ENCODE measurements at regions of chr7 and their contacts with region 1.

Region 1: DNA sequence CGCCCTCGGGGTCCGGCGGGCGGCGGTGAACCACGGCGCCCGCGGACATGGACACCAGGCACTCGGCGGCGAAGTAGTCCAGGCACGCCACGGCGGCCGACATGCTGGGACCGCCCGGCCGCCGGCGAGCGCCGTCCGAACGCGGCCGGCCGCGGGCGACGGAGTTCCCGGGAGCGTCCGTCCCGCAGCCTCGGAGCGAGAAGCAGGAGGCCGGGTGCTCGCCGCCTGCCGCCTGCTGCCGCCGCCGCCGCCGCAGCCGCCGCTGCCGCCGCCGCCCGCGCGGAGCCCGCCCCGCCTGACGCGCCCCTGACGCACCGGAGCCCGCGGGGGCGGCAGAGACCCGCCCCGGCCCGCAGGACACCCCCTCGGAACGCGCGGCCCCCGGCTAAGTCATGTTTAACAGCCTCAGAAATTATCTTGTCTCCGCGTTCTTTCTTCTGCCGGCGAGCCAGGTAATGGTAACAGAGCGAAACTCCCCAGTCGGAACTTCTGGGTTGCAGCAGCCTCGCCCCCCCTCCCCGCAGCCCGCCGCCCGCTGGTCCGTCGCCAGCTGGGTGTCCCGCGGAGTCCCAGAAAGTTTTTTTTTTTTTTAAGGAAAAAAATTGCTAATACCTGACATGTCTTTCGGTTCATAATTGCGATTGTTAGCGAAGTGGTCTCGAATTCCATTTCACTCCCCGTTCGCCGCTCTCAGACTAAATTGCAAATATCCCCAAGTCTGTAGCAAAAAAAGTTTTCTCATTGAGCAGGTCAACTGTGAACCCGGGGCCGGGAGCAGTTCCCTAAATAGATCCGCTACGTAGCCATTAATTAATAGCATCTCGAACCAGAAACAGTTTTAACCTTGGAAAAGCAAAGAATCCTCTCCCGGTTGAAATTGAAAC is at the start of gene KLF14:
- DNase-seq: no peak
- H3K4me3 ChIP-seq: peak within 1 kb of the TSS; percentile 55
- CTCF ChIP-seq: no peak

Region 2: GRCh38 chr7:130069978-130070860 is 664.0 kb before region 1 on chr7 and contains the start of gene KLHDC10:
- in situ Hi-C with region 1: loop called (anchors 25 kb)
- DNase-seq: peak; percentile 99
- H3K4me3 ChIP-seq: peak within 1 kb of the TSS; percentile 53
- CTCF ChIP-seq: no peak

Region 3: DNA sequence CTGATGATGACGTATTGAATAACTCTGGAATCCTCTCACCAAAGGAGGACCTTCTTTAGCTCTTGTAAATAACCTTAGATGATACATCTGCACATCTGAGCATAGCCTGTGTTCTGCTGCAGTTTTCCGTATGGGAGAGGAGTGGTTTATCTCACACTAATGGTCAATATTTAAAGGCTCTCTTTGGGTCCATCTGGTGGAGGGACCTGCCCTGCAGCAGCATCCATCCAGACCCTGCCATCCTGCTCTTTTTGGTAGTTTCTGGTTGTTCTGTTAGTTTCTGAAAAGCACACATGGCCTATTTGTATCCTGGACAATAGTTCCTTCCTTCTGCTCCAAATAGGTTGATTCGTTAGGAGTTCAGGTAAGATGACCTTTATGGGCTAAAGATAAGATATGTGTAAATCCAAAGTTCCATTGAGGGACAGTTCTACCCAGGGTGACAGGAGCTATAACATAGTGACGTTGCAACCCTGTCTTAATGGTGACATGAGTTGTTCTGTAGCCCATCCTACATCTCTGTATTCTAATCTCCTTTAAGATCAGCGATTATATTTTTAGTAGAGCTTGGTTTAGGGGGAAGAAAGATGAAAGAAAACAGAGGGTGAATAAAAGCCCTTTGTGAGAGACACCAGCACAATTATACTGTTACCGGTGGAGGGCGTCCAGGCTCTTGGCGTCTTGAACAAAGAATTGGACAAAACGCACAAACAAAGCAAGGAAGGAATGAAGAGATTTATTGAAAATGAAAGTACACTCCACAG is 59.9 kb after region 1 on chr7:
- in situ Hi-C with region 1: no loop called
- DNase-seq: peak; percentile 39
- H3K4me3 ChIP-seq: no peak overlapping the region
- CTCF ChIP-seq: peak; percentile 36

Region 4: DNA sequence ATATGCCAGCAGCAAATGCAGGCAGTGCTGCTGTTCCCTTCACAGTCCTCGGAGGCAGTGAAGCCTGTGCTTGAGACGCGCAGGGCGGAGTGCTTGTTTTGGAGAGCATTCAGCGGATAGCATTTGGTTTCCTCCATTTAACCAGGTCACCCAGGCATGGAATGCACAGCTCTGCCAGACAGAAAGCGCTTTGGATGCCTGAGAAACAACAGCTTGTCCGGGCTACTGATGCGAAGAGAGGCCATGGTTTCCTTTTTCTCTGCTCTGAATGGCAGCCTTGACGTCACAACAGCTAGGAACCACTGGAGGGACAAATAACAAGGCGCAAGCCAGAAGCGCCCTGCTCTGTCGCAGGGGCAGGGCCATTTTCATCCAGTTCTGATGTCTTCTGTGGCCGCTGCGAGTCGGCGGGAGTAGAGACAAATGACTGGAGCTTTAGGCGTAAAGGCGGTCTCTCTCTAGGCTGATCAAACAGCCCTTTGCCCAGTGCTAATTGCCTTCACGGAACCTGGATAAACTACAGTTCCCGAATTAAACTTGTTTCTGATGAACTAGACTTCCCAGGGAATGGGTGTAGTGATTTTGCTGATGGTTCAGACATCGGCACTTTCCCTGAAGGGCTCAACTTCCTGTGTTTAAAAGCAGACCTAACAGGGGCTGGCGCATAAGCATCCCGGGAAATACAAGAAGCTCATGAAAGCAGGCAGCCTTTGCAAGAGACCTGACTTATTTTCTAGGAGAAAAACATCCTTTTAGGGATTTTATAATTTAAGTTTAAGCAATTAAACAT is 187.4 kb after region 1 on chr7:
- in situ Hi-C with region 1: no loop called
- DNase-seq: peak; percentile 97
- H3K4me3 ChIP-seq: peak overlapping the region; percentile 21
- CTCF ChIP-seq: no peak

Measured in astrocyte of the cerebellum (primary cell).